Aorta (tissue), 5 donors: ENCODE measurements at regions of chr1 and their contacts with region 1.

Region 1: GRCh38 chr1:230084138-230084880 is 17.3 kb downstream of the GALNT2 start:
- DNase-seq: peak; percentile 89
- ATAC-seq: peak; percentile 86
- H3K4me3 ChIP-seq: no peak overlapping the region
- H3K27ac ChIP-seq: peak overlapping the region; percentile 57 to 99
- H3K4me1 ChIP-seq: peaks cover 16 to 18% of the 10 kb centered on the region in 2 donors
- H3K27me3 ChIP-seq: no peaks in the 10 kb centered on the region

Region 2: DNA sequence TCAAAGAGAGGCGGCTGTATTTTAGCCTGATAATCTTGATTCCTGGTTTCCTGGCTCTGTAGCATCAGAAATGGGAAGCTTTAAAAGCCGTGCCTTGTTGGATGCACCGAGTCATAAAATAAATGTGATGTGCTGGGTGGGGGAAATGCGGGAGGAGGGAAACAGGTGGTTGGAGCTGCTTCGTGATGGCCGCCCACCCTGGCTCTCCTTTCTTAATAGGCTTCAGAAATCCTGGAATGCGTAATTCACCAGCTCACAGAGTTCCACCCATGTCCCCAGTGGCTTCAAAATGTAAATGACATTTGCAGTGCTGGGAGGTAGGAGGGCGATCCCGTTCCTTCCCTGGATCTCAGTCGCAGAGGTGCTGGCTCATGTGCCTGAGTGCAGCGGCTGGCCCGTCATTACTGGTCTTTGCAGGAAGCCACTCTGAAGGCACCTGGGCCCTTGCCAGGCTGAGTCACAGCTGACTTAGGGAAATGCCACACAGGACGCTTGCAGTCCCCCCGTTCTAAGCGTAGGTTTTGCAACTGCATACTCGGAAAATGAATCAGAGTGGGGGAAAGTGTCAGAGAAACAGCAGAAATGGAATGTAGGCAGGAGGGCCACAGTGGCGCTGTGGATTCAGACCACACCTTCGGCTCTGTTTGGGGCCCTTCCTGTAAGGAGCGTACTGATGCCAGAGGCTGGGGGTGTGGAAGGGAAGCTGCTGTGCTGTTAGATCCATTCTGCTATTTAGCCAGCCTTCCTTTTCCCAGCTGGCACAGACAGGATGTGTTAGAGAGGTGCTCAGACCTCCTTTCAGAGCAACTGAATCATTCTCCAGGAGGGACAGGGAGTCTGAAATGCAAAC is 20.3 kb after region 1 on chr1:
- intact Hi-C with region 1: loop called in 1 of 2 experiments (anchors 2 kb)
- DNase-seq: peak; percentile 98 to 100
- ATAC-seq: peak; percentile 91
- H3K4me3 ChIP-seq: no peak overlapping the region
- H3K27ac ChIP-seq: peak overlapping the region; percentile 18 to 99
- H3K4me1 ChIP-seq: peaks cover 8 to 15% of the 10 kb centered on the region in 2 donors
- H3K27me3 ChIP-seq: no peaks in the 10 kb centered on the region